ENCODE measurements at regions of chr15 and their contacts with region 1.

Region 1: DNA sequence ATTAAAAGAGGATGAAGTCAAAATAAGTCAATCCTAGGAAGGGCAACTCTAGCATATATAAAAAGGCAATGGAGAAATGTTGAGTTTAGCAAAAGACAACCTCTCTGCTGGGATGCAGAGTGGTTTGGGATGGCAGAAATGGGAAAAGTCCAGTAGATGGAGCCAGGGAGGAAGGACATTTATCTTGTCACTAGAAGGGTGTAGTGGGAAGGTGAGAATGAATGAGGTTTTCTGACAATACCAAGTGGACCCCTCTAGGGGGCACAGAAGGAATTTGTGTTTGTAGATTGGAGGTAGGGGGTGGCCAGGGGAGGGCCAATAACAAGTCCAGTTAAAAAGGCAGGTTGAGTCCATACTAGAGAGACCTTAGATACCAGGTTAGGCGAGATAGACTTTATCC is 80.0 kb downstream of the THSD4 start:
- DNase-seq: peak in 1 of 2 experiments; percentile 46
- H3K4me3 ChIP-seq: no peak overlapping the region
- H3K27ac ChIP-seq: no peak overlapping the region
- H3K4me1 ChIP-seq: peaks cover 0 to 3% (median under 1%) of the 10 kb centered on the region in 4 experiments; a peak in 1 of 7 replicates
- H3K27me3 ChIP-seq: peaks cover 0 to 4% (median under 1%) of the 10 kb centered on the region in 4 experiments; a peak in 2 of 7 replicates
- CTCF ChIP-seq: peak in 2 of 3 experiments; percentile 69 to 78; a peak in 3 of 4 replicates
- EP300 ChIP-seq: no peak
- POLR2A ChIP-seq: no peak
- RAD21 ChIP-seq: peak; percentile 72 to 85

Region 2: DNA sequence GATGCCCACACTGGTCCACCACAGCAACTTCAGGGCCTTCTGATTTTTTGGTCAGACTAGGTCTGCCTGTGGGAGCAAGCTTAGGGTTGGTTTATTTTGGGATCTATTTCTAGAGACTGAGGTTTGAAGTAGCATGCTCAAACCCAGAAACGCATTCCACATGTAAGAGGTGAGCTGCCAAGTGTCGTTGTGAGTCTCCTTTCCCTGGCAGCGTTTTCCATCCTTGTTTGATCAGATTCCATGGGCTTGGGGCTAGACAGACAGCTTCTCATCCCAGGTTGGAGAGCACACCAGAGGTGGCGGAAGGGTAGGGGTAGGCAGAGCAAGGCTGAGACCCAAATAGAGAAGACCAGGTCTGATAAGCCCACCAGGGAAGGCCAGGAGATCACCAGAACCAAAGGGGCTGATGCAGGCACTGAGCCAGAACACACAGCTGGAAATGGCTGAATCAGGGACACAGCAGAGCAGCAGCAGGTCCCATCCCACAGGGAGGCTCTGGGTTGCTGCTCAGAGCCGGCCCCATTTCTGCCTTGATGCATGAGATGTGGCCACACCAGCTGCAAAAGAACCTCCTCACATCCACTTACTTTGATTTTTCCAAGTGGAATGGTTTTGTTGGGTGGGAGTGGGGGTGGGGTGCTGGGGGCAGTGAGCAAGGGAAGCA is 106.8 kb after region 1 on chr15:
- CTCF ChIA-PET with region 1: no interaction called
- POLR2A ChIA-PET with region 1: no interaction called
- DNase-seq: no peak
- H3K4me3 ChIP-seq: no peak overlapping the region
- H3K27ac ChIP-seq: no peak overlapping the region
- H3K4me1 ChIP-seq: no peaks in the 10 kb centered on the region
- H3K27me3 ChIP-seq: no peaks in the 10 kb centered on the region
- CTCF ChIP-seq: no peak
- EP300 ChIP-seq: no peak
- POLR2A ChIP-seq: no peak
- RAD21 ChIP-seq: no peak

Region 3: DNA sequence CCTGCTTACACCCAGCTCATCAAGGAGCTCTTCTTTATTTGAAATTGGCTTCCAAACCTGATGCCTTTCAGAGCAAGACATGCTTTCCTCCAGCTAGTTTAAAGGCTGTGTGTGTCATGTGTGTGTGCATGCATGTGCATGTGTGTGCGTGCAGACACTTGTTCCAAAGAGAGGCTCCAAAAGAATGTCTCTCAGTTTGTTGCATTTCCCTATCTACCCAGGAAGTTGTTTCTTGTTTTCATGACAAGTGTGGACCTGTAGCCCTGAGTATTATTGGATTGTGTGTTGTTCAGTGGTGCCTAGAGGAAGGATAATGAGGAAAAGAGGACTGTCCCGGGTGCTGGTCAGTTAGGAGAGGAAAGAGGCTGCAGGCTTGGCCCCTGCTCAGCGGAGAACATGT is 160.0 kb after region 1 on chr15:
- CTCF ChIA-PET with region 1: no interaction called
- POLR2A ChIA-PET with region 1: no interaction called
- DNase-seq: no peak
- H3K4me3 ChIP-seq: no peak overlapping the region
- H3K27ac ChIP-seq: no peak overlapping the region
- H3K4me1 ChIP-seq: peaks cover 0 to 3% (median 0%) of the 10 kb centered on the region in 4 experiments; a peak in 2 of 7 replicates
- H3K27me3 ChIP-seq: no peaks in the 10 kb centered on the region
- CTCF ChIP-seq: no peak
- EP300 ChIP-seq: no peak
- POLR2A ChIP-seq: no peak
- RAD21 ChIP-seq: no peak

Region 4: GRCh38 chr15:71437404-71438318 is 242.4 kb after region 1 on chr15:
- CTCF ChIA-PET with region 1: interaction called, 11 read pairs
- POLR2A ChIA-PET with region 1: no interaction called
- DNase-seq: no peak
- H3K4me3 ChIP-seq: no peak overlapping the region
- H3K27ac ChIP-seq: no peak overlapping the region
- H3K4me1 ChIP-seq: no peaks in the 10 kb centered on the region; a peak in 2 of 7 replicates
- H3K27me3 ChIP-seq: no peaks in the 10 kb centered on the region
- CTCF ChIP-seq: no peak
- EP300 ChIP-seq: no peak
- POLR2A ChIP-seq: no peak
- RAD21 ChIP-seq: no peak